ENCODE measurements at regions of chr6 and their contacts with region 1.

Region 1: DNA sequence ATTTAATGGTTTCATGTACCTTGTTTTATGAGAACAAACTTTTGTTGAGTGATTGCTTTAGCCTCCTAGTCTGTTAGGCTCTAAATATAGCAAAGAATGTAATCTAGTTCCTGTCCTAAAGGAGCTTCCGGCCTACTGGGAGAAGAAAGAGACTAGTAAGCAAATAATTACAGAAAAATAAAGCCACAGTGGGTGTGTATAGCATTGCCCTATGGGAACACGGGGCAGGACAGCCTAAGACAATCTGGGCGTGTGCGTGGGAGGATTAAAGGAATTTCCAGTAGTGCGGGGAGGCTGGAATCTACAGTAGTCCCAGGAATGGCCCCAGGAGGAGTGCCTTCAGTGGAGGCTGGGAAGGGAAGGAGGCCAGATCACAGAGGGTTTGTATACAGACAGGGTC is 98.1 kb upstream of the AKAP12 start:
- DNase-seq: peak; percentile 61
- H3K4me3 ChIP-seq: no peak overlapping the region
- H3K27ac ChIP-seq: peak overlapping the region; percentile 63
- H3K4me1 ChIP-seq: peaks cover 12% of the 10 kb centered on the region
- H3K27me3 ChIP-seq: no peaks in the 10 kb centered on the region
- CTCF ChIP-seq: no peak
- POLR2A ChIP-seq: no peak

Region 2: DNA sequence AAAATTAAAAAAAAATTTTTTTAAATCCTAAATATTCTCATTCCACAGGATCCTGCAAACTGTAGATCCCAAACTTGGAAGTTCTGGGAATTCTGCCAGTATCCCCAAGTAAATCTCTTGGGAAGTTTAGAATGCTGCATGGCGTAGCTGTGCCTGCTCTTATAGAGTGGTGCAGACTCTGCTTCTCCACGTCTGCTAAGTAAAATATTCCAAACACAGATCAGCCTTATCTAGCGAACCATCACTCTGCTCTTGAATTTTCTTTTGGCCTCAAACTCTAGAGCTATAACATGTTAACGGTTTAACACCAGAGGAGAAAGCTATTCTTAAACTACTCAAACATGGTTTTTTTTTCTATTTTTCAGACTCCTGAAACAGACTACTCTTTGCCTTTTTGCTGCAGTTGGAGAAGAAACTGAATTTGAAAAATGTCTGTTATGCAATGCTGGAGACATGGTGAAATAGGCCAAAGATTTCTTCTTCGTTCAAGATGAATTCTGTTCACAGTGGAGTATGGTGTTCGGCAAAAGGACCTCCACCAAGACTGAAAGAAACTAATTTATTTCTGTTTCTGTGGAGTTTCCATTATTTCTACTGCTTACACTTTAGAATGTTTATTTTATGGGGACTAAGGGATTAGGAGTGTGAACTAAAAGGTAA is 40.4 kb before region 1 on chr6:
- CTCF ChIA-PET with region 1: no interaction called
- POLR2A ChIA-PET with region 1: no interaction called
- dilution Hi-C with region 1: no loop called
- intact Hi-C with region 1: loop called (anchors 5 kb)
- DNase-seq: no peak
- H3K4me3 ChIP-seq: no peak overlapping the region
- H3K27ac ChIP-seq: no peak overlapping the region
- H3K4me1 ChIP-seq: no peaks in the 10 kb centered on the region
- H3K27me3 ChIP-seq: no peaks in the 10 kb centered on the region
- CTCF ChIP-seq: no peak
- POLR2A ChIP-seq: no peak

Region 3: DNA sequence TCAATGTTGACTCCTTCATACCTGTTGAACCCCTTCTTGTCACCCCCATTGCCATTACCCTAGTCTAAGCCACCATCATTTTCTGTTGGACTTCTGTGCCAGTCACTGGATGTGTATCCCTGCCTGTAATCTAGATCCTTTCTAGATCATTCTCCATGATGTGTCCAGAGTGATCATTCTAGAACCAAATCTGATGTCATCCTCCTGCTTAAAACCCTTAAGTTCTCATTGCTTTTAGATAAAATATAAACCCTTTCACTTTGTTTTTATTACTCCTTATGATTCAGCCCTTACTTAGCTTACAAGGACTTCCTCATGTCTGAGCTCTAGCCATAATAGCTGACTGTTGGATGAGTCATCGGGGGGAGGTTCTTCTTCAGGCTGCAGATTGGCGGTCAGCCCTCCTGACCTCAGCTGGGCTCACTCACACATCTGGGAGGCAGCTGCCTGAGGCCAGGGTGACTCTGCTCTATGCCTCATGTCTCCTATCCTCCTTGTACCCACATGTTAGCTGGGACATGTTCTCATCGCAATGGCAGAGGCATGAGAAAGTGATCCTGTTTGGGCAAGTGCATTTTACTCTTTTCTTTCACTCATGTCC is 953.4 kb after region 1 on chr6:
- CTCF ChIA-PET with region 1: no interaction called
- POLR2A ChIA-PET with region 1: no interaction called
- dilution Hi-C with region 1: no loop called
- intact Hi-C with region 1: no loop called
- DNase-seq: peak; percentile 97
- H3K4me3 ChIP-seq: no peak overlapping the region
- H3K27ac ChIP-seq: peak overlapping the region; percentile 74
- H3K4me1 ChIP-seq: peaks cover 42% of the 10 kb centered on the region
- H3K27me3 ChIP-seq: no peaks in the 10 kb centered on the region
- CTCF ChIP-seq: no peak
- POLR2A ChIP-seq: no peak

Measured in endothelial cell of umbilical vein (primary cell).